ENCODE measurements at regions of chr9 and their contacts with region 1.

Region 1: DNA sequence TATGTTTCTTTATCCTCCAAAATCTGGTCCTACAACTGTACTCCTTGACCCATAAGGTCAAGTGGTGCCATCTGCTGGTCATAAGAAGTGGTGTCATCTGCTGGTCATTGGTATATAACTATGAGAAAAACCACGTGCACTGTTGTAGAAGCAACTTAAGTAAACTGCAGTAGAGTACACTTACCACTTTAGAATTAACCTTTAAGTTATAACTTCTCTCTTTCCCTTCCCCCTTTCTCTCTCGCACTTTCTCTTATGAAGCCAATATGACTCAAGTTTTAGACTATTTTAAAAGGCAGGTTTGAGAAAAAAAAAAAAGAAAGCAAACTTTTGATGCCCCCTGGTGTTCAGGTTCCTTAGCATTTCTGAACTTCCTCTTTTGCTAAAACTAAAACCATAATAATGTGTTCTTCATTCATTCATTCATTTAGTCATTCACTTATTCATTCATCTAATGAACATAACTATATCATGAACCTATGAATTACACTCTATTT is 12.8 kb upstream of the MTAP start:
- DNase-seq: peak in 11 of 14 experiments; percentile 17 to 88 (median 44)
- ATAC-seq: peak; percentile 97
- H3K4me3 ChIP-seq: peak overlapping the region; percentile 29
- H3K4me3 Mint-ChIP-seq: peak overlapping the region; percentile 59
- H3K27ac ChIP-seq: no peak overlapping the region
- H3K27ac Mint-ChIP-seq: no peak overlapping the region
- H3K4me1 ChIP-seq: no peaks in the 10 kb centered on the region
- H3K4me1 Mint-ChIP-seq: no peaks in the 10 kb centered on the region
- H3K27me3 ChIP-seq: peaks cover 0 to 12% of the 10 kb centered on the region in 2 experiments
- H3K27me3 Mint-ChIP-seq: peaks cover 4% of the 10 kb centered on the region
- CTCF ChIP-seq: peak; percentile 99

Region 2: GRCh38 chr9:21239911-21240310 is 549.7 kb before region 1 on chr9 and contains the start of gene IFNA14:
- CTCF ChIA-PET with region 1: no interaction called
- POLR2A ChIA-PET with region 1: no interaction called
- intact Hi-C with region 1: loop called in 1 of 2 experiments (anchors 1 kb)
- DNase-seq: no peak
- ATAC-seq: no peak
- H3K4me3 ChIP-seq: no peak within 1 kb of the TSS
- H3K4me3 Mint-ChIP-seq: no peak within 1 kb of the TSS
- H3K27ac ChIP-seq: no peak within 1 kb of the TSS
- H3K27ac Mint-ChIP-seq: no peak within 1 kb of the TSS
- H3K4me1 ChIP-seq: no peaks in the 10 kb centered on the region
- H3K4me1 Mint-ChIP-seq: peaks cover 20% of the 10 kb centered on the region
- H3K27me3 ChIP-seq: peaks cover 0 to 5% of the 10 kb centered on the region in 2 experiments
- H3K27me3 Mint-ChIP-seq: peaks cover 8% of the 10 kb centered on the region
- CTCF ChIP-seq: no peak
- total RNA-seq, gene IFNA14: not detected

Region 3: DNA sequence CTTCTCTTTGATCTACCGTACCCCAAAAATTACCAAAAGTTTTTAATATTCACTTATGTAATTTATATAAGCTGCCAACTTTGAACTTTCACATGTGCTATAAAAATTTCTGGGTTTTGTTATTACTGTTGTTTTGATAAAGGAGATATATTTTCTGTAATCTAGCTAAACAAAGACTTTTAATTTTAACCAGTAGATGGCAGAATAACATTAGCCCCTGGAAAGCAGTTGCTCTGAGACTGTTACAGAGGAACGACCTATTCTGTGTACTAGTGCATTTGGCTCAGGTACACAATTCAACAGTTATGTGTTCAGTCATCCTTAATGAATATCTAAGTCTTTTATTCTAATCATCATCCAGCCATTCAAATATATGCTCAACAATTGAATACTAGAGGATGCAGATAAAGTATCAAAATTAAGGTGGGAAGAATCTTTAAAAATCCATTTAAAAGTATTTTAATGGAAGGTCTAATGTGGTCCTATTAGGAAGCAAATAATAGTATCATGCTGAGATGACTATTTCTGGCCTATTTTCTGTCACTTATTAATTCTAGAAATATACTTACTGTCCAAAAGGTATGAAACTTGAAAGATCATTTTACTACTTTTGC is 463.0 kb before region 1 on chr9:
- CTCF ChIA-PET with region 1: interaction called, 6 read pairs
- POLR2A ChIA-PET with region 1: no interaction called
- intact Hi-C with region 1: loop called (anchors 2 to 5 kb)
- DNase-seq: peak in 3 of 14 experiments; percentile 76 to 77 (median 76)
- ATAC-seq: peak; percentile 91
- H3K4me3 ChIP-seq: no peak overlapping the region
- H3K4me3 Mint-ChIP-seq: peak overlapping the region; percentile 60
- H3K27ac ChIP-seq: no peak overlapping the region
- H3K27ac Mint-ChIP-seq: peak overlapping the region; percentile 7
- H3K4me1 ChIP-seq: peaks cover 6% of the 10 kb centered on the region
- H3K4me1 Mint-ChIP-seq: peaks cover 70% of the 10 kb centered on the region
- H3K27me3 ChIP-seq: no peaks in the 10 kb centered on the region
- H3K27me3 Mint-ChIP-seq: no peaks in the 10 kb centered on the region
- CTCF ChIP-seq: peak; percentile 79

Region 4: DNA sequence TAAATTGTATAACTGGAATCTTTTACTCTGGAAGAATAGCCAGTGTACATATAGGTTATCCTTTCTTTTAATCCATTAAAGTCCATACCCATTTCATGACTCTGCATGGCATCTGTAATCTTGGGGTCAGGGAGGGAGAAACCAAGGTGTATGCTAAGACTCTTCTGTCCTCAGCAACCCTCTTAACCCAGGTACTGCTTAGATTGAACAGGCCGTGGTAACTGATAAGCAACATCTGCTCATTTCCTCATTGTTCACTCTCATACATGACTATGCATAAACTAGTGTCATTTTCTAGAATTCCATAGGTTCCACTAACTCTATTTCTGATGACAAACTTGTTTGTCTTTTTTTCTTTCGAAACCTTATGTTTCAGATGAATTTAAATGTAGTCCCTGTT is 238.2 kb before region 1 on chr9:
- CTCF ChIA-PET with region 1: no interaction called
- POLR2A ChIA-PET with region 1: no interaction called
- intact Hi-C with region 1: loop called in 1 of 2 experiments (anchors 5 kb)
- DNase-seq: no peak
- ATAC-seq: no peak
- H3K4me3 ChIP-seq: no peak overlapping the region
- H3K4me3 Mint-ChIP-seq: no peak overlapping the region
- H3K27ac ChIP-seq: no peak overlapping the region
- H3K27ac Mint-ChIP-seq: no peak overlapping the region
- H3K4me1 ChIP-seq: no peaks in the 10 kb centered on the region
- H3K4me1 Mint-ChIP-seq: peaks cover 18% of the 10 kb centered on the region
- H3K27me3 ChIP-seq: peaks cover 7 to 15% of the 10 kb centered on the region in 2 experiments
- H3K27me3 Mint-ChIP-seq: peaks cover 24% of the 10 kb centered on the region
- CTCF ChIP-seq: no peak

Region 5: DNA sequence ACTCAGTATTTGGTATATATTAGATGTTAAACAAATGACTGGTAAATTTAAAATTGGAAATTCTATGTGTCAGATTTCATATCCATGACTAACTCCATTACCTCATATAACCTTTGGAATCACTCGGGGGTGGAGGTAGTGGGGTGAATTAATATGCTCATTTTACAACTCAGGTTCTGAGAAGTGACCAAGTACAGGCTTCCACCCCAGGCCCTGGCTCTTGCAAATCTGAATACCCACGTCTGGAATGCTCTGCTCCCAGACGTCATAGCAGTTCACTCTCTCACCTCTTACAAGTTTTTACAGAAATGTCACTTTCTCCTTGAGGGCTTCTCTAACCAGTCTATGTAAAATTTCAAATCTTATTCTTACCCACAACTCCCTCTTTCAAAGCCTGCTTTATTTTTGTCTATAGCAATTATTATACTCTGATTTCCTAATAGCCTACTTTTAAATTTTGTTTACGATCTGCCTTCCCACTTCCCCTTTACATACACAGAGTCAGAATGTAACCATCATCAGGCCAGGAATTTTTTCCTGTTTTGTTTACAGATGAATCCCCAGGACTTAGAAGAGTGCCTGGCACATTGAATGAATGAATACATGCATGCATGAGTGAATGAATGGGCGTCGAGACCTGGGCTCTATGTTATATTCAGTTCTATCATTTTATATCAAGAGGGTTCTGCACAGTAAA is 173.4 kb before region 1 on chr9:
- CTCF ChIA-PET with region 1: no interaction called
- POLR2A ChIA-PET with region 1: no interaction called
- intact Hi-C with region 1: no loop called
- DNase-seq: no peak
- ATAC-seq: no peak
- H3K4me3 ChIP-seq: no peak overlapping the region
- H3K4me3 Mint-ChIP-seq: no peak overlapping the region
- H3K27ac ChIP-seq: no peak overlapping the region
- H3K27ac Mint-ChIP-seq: no peak overlapping the region
- H3K4me1 ChIP-seq: peaks cover 17% of the 10 kb centered on the region
- H3K4me1 Mint-ChIP-seq: peaks cover 37% of the 10 kb centered on the region
- H3K27me3 ChIP-seq: no peaks in the 10 kb centered on the region
- H3K27me3 Mint-ChIP-seq: no peaks in the 10 kb centered on the region
- CTCF ChIP-seq: no peak

Region 6: DNA sequence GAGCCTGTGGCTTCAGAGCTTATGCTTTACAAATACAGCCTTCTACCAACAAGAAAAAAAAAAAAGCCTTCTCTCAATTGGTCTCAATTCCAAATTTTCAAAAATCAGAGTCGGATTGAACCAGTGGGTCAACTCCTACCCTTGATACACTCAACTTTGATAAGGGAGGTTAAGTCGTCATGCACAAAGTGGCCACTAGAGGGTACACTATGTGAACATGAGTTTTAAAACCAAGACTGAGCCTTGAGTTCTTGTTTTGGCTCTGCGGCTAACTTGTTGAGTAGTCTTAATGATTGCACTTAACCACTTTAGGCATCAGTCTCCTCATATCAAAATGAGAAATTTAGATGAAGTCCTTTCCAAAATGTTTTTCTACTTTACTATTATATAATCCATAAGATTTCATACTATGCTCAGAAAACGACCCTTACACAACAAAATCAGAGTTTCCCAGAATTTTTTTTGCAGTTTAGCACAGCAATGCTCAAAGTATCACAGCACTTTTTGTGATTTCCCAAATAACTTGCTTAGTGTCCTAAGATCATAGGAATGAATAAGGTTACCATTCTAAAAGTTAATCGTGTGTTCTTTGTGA is 80.0 kb before region 1 on chr9:
- CTCF ChIA-PET with region 1: no interaction called
- POLR2A ChIA-PET with region 1: no interaction called
- intact Hi-C with region 1: loop called (anchors 1 kb)
- DNase-seq: peak; percentile 15 to 77 (median 52)
- ATAC-seq: peak; percentile 72
- H3K4me3 ChIP-seq: no peak overlapping the region
- H3K4me3 Mint-ChIP-seq: no peak overlapping the region
- H3K27ac ChIP-seq: no peak overlapping the region
- H3K27ac Mint-ChIP-seq: no peak overlapping the region
- H3K4me1 ChIP-seq: peaks cover 4% of the 10 kb centered on the region
- H3K4me1 Mint-ChIP-seq: peaks cover 26% of the 10 kb centered on the region
- H3K27me3 ChIP-seq: no peaks in the 10 kb centered on the region
- H3K27me3 Mint-ChIP-seq: no peaks in the 10 kb centered on the region
- CTCF ChIP-seq: peak; percentile 95

Measured in CD4-positive, alpha-beta T cell (primary cell).